Calu3 (cell line): ENCODE measurements at regions of chr15 and their contacts with region 1.

Region 1: GRCh38 chr15:88476635-88477060 is 9.1 kb downstream of the MRPS11 start:
- DNase-seq: peak; percentile 48
- H3K4me3 Mint-ChIP-seq: no peak overlapping the region
- H3K27ac Mint-ChIP-seq: no peak overlapping the region
- H3K4me1 Mint-ChIP-seq: no peaks in the 10 kb centered on the region
- H3K27me3 Mint-ChIP-seq: no peaks in the 10 kb centered on the region
- CTCF ChIP-seq: peak; percentile 72

Region 2: DNA sequence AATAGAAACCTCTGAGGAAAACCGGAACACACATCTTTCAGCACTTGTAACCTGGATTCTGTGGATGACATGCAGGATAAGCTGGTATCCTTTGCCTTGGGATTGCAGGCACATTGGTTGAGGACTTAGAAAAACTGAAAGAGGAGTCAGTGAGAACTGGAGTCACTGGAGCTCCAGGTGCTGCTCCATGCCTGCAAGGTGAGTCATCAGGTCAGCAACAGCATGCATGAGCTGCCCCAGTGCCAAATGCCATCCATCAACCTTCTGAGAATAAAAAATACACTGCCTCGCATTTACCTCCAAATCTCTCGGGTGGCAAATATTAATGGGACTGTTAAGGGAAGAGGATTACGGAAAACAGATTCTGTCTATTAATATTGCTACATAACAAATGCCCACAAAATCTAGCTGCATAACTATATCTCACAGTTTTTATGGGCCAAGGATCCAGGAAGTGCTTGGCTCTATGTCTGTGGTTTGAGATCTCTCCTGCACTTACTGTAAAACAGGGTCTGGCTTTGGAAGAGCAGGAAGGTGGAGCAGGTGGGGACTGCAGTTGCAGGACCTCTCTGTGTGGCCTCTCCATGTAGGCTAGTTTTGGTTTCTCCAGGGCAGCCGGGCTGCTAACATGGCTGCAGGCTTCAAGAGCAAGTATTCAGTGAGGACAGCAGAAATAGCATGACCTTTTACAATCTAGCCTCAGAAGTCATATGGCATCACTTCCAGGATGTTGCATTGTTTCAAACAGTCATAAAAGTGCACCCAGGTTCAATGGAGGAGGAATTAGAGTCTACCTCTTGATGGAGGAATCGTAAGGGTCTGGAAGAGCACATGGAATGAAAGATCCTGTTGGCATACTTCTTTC is 949.0 kb before region 1 on chr15:
- CTCF ChIA-PET with region 1: no interaction called
- intact Hi-C with region 1: no loop called
- DNase-seq: no peak
- H3K4me3 Mint-ChIP-seq: no peak overlapping the region
- H3K27ac Mint-ChIP-seq: no peak overlapping the region
- H3K4me1 Mint-ChIP-seq: no peaks in the 10 kb centered on the region
- H3K27me3 Mint-ChIP-seq: no peaks in the 10 kb centered on the region
- CTCF ChIP-seq: no peak

Region 3: GRCh38 chr15:88610701-88611231 is 134.1 kb after region 1 on chr15:
- CTCF ChIA-PET with region 1: interaction called, 5 read pairs
- intact Hi-C with region 1: loop called (anchors 1 kb)
- DNase-seq: no peak
- H3K4me3 Mint-ChIP-seq: no peak overlapping the region
- H3K27ac Mint-ChIP-seq: no peak overlapping the region
- H3K4me1 Mint-ChIP-seq: peaks cover 29% of the 10 kb centered on the region
- H3K27me3 Mint-ChIP-seq: peaks cover 63% of the 10 kb centered on the region
- CTCF ChIP-seq: no peak

Region 4: DNA sequence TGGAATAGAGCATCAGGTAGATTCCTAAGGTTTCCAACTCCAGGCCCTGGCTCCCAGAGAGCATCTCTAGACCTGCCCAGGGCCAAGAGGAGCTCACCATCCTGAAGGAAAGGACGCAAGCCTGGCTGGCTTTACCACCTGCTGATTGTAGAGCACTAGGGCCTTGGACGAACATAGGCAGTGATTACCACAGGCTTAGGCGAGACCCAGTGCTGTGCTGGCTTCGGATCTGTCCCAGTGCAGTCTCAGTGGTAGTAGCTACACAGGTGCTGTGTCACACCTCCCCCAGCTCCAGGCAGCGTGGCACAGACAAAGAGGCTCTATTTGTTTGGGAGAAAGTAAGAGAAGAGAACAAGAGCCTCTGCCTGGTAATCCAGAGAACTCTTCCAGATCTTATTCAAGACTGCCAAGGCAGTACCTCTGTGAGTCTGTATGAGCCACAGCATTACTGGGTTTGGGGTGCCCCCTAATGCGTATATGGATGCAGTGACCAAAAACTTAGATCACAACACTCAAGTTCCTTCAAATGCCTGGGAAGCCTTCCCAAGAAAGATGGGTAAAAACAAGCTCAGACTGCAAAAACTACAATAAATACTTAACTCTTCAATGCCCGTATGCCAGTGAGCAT is 187.6 kb after region 1 on chr15:
- CTCF ChIA-PET with region 1: no interaction called
- intact Hi-C with region 1: loop called (anchors 1 kb)
- DNase-seq: peak; percentile 58
- H3K4me3 Mint-ChIP-seq: no peak overlapping the region
- H3K27ac Mint-ChIP-seq: no peak overlapping the region
- H3K4me1 Mint-ChIP-seq: peaks cover 14% of the 10 kb centered on the region
- H3K27me3 Mint-ChIP-seq: peaks cover 15% of the 10 kb centered on the region
- CTCF ChIP-seq: peak; percentile 35

Region 5: GRCh38 chr15:88701561-88702095 is 225.0 kb after region 1 on chr15:
- CTCF ChIA-PET with region 1: no interaction called
- intact Hi-C with region 1: loop called (anchors 5 kb)
- DNase-seq: peak; percentile 63
- H3K4me3 Mint-ChIP-seq: no peak overlapping the region
- H3K27ac Mint-ChIP-seq: no peak overlapping the region
- H3K4me1 Mint-ChIP-seq: no peaks in the 10 kb centered on the region
- H3K27me3 Mint-ChIP-seq: peaks cover 96% of the 10 kb centered on the region
- CTCF ChIP-seq: peak; percentile 68

Region 6: DNA sequence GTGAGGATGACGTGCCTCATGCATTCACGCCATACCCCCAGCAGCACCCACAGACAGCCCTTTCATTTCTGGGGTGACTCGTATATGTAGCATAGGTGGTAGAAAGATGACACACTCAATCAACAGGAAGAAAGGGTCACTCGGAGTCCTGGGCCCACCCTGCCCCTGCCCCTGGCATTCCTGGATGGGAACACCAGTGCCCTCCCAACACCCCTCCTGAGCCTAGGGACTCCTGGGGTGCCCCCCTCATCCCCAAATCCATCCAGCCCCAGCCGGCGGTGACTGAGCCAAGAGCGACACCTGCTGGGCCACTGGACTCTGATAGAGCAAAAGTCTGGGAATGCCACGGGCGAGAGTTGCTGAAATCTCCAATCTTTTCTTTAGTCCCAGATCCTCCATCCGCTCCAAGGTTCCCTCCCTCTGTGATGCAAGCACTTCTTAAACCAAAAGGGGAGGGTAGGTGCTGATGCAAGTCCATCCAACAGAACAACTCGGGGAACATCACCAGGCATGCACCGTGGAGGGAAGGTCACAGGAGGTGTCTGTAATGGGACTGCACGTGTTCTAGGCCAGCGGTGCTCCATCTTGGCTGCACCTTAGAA is 357.7 kb after region 1 on chr15:
- CTCF ChIA-PET with region 1: no interaction called
- intact Hi-C with region 1: loop called (anchors 5 kb)
- DNase-seq: peak; percentile 55
- H3K4me3 Mint-ChIP-seq: no peak overlapping the region
- H3K27ac Mint-ChIP-seq: no peak overlapping the region
- H3K4me1 Mint-ChIP-seq: no peaks in the 10 kb centered on the region
- H3K27me3 Mint-ChIP-seq: peaks cover 51% of the 10 kb centered on the region
- CTCF ChIP-seq: peak; percentile 69